Caco-2 (cell line): ENCODE measurements at regions of chr3 and their contacts with region 1.

Region 1: GRCh38 chr3:71258116-71258515 is 325.4 kb downstream of the FOXP1 start:
- DNase-seq: no peak
- H3K4me3 ChIP-seq: no peak overlapping the region
- H3K4me3 Mint-ChIP-seq: peak overlapping the region; percentile 13
- H3K27ac Mint-ChIP-seq: peak overlapping the region; percentile 77
- H3K4me1 ChIP-seq: peaks cover 67% of the 10 kb centered on the region
- H3K4me1 Mint-ChIP-seq: peaks cover 34% of the 10 kb centered on the region
- H3K27me3 ChIP-seq: no peaks in the 10 kb centered on the region
- H3K27me3 Mint-ChIP-seq: no peaks in the 10 kb centered on the region
- CTCF ChIP-seq: no peak

Region 2: GRCh38 chr3:70943886-70944285 is 314.2 kb before region 1 on chr3:
- CTCF ChIA-PET with region 1: no interaction called
- POLR2A ChIA-PET with region 1: no interaction called
- intact Hi-C with region 1: no loop called
- DNase-seq: no peak
- H3K4me3 ChIP-seq: no peak overlapping the region
- H3K4me3 Mint-ChIP-seq: no peak overlapping the region
- H3K27ac Mint-ChIP-seq: no peak overlapping the region
- H3K4me1 ChIP-seq: no peaks in the 10 kb centered on the region
- H3K4me1 Mint-ChIP-seq: no peaks in the 10 kb centered on the region
- H3K27me3 ChIP-seq: no peaks in the 10 kb centered on the region; the same call in 1 of the 2 replicates
- H3K27me3 Mint-ChIP-seq: peaks cover 11% of the 10 kb centered on the region
- CTCF ChIP-seq: no peak

Region 3: GRCh38 chr3:71090207-71090606 is 167.9 kb before region 1 on chr3:
- CTCF ChIA-PET with region 1: no interaction called
- POLR2A ChIA-PET with region 1: no interaction called
- intact Hi-C with region 1: no loop called
- DNase-seq: no peak
- H3K4me3 ChIP-seq: no peak overlapping the region
- H3K4me3 Mint-ChIP-seq: no peak overlapping the region
- H3K27ac Mint-ChIP-seq: no peak overlapping the region
- H3K4me1 ChIP-seq: peaks cover 22% of the 10 kb centered on the region
- H3K4me1 Mint-ChIP-seq: peaks cover 22% of the 10 kb centered on the region
- H3K27me3 ChIP-seq: no peaks in the 10 kb centered on the region
- H3K27me3 Mint-ChIP-seq: no peaks in the 10 kb centered on the region
- CTCF ChIP-seq: no peak

Region 4: DNA sequence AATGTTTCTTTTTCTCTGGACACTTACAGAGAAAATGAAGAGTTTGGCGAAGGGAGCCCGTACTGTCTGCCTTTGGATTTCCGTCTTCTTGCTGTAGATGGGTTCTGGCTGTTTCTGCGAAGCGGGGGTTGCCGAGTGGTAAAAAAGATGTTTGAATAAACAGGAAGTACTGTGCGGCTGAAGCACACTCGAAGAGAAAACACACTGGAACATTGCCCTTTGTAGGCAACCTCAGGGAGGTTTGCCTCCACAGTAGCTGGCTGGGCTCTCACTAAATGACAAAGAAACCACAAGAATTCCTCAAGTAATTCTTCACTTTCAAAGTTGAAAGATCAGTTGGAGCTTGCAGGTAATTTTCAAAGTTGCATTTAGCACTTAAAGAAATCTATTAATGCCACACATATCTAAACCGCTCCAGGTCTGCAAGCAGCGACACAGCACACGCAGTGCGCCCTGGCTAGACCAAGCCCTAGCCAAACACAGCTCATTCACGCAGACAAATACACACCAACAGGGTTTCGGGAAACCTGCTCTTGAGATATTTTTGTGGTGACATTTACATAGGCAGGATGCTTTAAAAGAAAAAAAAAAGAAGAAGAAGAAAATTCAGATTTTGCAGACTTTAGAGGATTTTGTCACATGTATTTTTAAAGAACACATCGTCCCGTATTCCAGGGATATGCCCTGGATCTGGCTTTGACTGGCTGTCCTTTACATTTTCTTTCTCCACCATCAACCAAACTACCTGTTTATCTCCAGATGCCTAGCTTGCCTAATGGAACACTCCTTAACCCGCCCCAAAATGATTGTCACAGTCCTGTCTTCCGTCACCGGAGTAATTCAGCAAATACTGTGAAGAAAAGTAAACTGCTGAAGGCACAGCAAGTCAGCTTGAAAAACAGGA is 127.4 kb before region 1 on chr3:
- CTCF ChIA-PET with region 1: no interaction called
- POLR2A ChIA-PET with region 1: no interaction called
- intact Hi-C with region 1: loop called (anchors 2 kb)
- DNase-seq: peak in 1 of 2 experiments; percentile 56
- H3K4me3 ChIP-seq: peak overlapping the region; percentile 50
- H3K4me3 Mint-ChIP-seq: peak overlapping the region; percentile 94
- H3K27ac Mint-ChIP-seq: peak overlapping the region; percentile 83
- H3K4me1 ChIP-seq: peaks cover 66% of the 10 kb centered on the region
- H3K4me1 Mint-ChIP-seq: peaks cover 37% of the 10 kb centered on the region
- H3K27me3 ChIP-seq: no peaks in the 10 kb centered on the region
- H3K27me3 Mint-ChIP-seq: no peaks in the 10 kb centered on the region
- CTCF ChIP-seq: no peak

Region 5: DNA sequence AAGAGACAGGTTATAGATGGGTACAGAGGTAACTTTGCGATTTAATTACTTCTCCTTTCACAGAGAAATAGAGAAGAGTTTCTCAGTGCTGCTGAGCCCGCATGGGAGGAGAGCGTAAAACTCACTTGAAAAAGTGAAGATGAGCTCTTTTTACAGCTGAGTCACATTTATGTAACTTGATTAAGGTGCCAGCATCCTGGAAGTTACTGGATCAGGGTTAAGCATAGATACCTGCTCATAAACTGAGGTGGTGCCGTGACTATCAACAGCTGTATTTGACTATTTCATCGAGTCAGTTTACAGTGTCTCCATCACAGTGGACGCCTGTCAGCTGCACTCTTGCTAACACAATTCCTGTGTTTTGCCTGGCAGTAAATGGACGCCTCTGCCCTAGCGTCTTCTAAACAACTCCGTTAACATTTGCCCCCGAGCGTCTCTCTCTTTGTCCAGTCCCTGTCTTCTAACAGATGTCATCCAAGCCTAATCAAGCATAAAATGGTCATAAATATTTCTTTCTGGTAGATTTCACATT is 89.2 kb before region 1 on chr3:
- CTCF ChIA-PET with region 1: no interaction called
- POLR2A ChIA-PET with region 1: interaction called, 7 read pairs
- intact Hi-C with region 1: loop called (anchors 2 kb)
- DNase-seq: no peak
- H3K4me3 ChIP-seq: peak overlapping the region; percentile 1
- H3K4me3 Mint-ChIP-seq: peak overlapping the region; percentile 58
- H3K27ac Mint-ChIP-seq: peak overlapping the region; percentile 83
- H3K4me1 ChIP-seq: peaks cover 81% of the 10 kb centered on the region
- H3K4me1 Mint-ChIP-seq: peaks cover 66% of the 10 kb centered on the region
- H3K27me3 ChIP-seq: no peaks in the 10 kb centered on the region
- H3K27me3 Mint-ChIP-seq: no peaks in the 10 kb centered on the region
- CTCF ChIP-seq: no peak

Region 6: GRCh38 chr3:71208211-71209108 is 49.7 kb before region 1 on chr3:
- CTCF ChIA-PET with region 1: interaction called, 3 read pairs
- POLR2A ChIA-PET with region 1: interaction called, 7 read pairs
- intact Hi-C with region 1: loop called (anchors 1 kb)
- DNase-seq: peak; percentile 84 to 88
- H3K4me3 ChIP-seq: no peak overlapping the region
- H3K4me3 Mint-ChIP-seq: peak overlapping the region; percentile 66
- H3K27ac Mint-ChIP-seq: peak overlapping the region; percentile 93
- H3K4me1 ChIP-seq: peaks cover 60% of the 10 kb centered on the region
- H3K4me1 Mint-ChIP-seq: peaks cover 54% of the 10 kb centered on the region
- H3K27me3 ChIP-seq: no peaks in the 10 kb centered on the region
- H3K27me3 Mint-ChIP-seq: no peaks in the 10 kb centered on the region
- CTCF ChIP-seq: no peak

Region 7: DNA sequence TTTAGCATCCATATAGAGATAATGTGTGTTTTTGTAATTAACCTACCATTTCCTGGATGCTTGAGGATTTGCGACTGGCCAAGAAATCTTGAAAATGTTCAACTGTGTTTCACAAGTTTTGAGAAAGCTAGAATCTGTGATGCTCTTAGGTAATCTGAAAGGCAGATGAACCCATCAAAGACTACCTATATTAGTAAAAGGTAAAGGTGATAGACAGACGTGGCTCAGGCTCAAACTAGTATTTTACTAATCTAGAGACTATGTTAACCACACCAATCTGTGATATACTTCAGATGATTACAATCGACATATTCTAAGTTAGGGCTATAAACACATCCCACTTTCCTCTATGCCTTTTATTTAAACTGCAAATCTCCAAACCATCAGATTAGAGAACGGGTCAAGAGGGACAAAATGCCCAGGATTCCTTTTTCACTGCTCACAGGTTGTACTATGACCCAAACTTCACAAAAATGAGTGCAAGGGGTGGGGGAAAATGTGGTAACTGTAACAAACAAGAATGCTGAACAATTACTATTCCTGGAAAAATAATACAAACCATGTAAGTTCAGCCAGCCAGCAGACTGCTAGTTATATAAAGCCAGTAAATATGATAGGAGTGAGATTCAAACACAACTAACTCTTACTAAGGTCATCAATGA is 30.3 kb after region 1 on chr3:
- CTCF ChIA-PET with region 1: no interaction called
- POLR2A ChIA-PET with region 1: no interaction called
- intact Hi-C with region 1: loop called (anchors 1 kb)
- DNase-seq: peak in 1 of 2 experiments; percentile 28
- H3K4me3 ChIP-seq: no peak overlapping the region
- H3K4me3 Mint-ChIP-seq: no peak overlapping the region
- H3K27ac Mint-ChIP-seq: no peak overlapping the region
- H3K4me1 ChIP-seq: peaks cover 33% of the 10 kb centered on the region
- H3K4me1 Mint-ChIP-seq: peaks cover 24% of the 10 kb centered on the region
- H3K27me3 ChIP-seq: no peaks in the 10 kb centered on the region
- H3K27me3 Mint-ChIP-seq: no peaks in the 10 kb centered on the region
- CTCF ChIP-seq: no peak

Region 8: DNA sequence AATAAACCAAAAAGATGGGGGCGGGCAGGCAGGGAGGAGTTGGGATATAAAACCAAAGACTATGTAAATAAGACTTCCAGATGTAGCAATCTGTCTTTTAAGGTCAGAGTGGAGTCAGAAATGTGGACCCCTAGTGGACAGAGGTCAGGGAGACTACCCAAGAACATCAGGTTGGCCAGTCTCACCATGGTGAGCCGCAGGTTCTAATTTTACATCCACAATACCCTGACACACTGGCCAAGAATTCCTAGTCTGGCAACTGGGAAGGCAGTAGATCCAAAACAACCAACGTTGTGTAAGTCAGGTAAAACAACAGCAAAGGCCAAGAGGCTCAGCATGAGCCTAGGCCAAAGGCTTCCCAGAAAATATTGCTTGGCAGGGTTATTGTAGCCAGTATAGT is 122.0 kb after region 1 on chr3:
- CTCF ChIA-PET with region 1: no interaction called
- POLR2A ChIA-PET with region 1: no interaction called
- intact Hi-C with region 1: no loop called
- DNase-seq: peak in 1 of 2 experiments; percentile 38
- H3K4me3 ChIP-seq: no peak overlapping the region
- H3K4me3 Mint-ChIP-seq: no peak overlapping the region
- H3K27ac Mint-ChIP-seq: no peak overlapping the region
- H3K4me1 ChIP-seq: peaks cover 24% of the 10 kb centered on the region
- H3K4me1 Mint-ChIP-seq: peaks cover 20% of the 10 kb centered on the region
- H3K27me3 ChIP-seq: no peaks in the 10 kb centered on the region
- H3K27me3 Mint-ChIP-seq: no peaks in the 10 kb centered on the region
- CTCF ChIP-seq: peak in 1 of 2 experiments; percentile 39

Region 9: GRCh38 chr3:71416876-71417275 is 158.8 kb after region 1 on chr3:
- CTCF ChIA-PET with region 1: no interaction called
- POLR2A ChIA-PET with region 1: no interaction called
- intact Hi-C with region 1: loop called (anchors 1 kb)
- DNase-seq: peak; percentile 61 to 67
- H3K4me3 ChIP-seq: no peak overlapping the region
- H3K4me3 Mint-ChIP-seq: peak overlapping the region; percentile 63
- H3K27ac Mint-ChIP-seq: peak overlapping the region; percentile 96
- H3K4me1 ChIP-seq: peaks cover 38% of the 10 kb centered on the region
- H3K4me1 Mint-ChIP-seq: peaks cover 44% of the 10 kb centered on the region
- H3K27me3 ChIP-seq: no peaks in the 10 kb centered on the region
- H3K27me3 Mint-ChIP-seq: no peaks in the 10 kb centered on the region
- CTCF ChIP-seq: peak; percentile 35 to 39

Region 10: DNA sequence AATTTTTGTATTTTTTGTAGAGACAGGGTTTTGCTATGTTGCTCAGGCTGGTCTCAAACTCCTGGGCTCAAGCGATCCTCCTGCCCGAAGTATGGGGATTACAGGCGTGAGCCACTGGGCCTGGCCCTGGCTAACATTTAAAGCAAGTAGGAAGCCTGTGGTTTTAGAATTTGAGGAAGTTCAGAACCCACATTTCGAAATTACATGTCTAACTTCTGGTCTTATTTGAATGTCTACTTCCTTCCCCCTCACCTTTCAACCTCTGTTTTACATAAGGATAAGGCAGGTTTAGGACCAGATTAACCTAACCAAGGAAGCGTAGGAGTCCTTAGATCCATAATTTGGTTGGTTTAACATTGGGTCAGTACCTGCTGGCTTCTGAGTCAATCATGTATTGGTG is 647.3 kb after region 1 on chr3:
- CTCF ChIA-PET with region 1: no interaction called
- POLR2A ChIA-PET with region 1: no interaction called
- intact Hi-C with region 1: no loop called
- DNase-seq: no peak
- H3K4me3 ChIP-seq: no peak overlapping the region
- H3K4me3 Mint-ChIP-seq: no peak overlapping the region
- H3K27ac Mint-ChIP-seq: no peak overlapping the region
- H3K4me1 ChIP-seq: no peaks in the 10 kb centered on the region
- H3K4me1 Mint-ChIP-seq: peaks cover 9% of the 10 kb centered on the region
- H3K27me3 ChIP-seq: no peaks in the 10 kb centered on the region
- H3K27me3 Mint-ChIP-seq: peaks cover 20% of the 10 kb centered on the region
- CTCF ChIP-seq: no peak